ENCODE measurements at regions of chr12 and their contacts with region 1.

Region 1: DNA sequence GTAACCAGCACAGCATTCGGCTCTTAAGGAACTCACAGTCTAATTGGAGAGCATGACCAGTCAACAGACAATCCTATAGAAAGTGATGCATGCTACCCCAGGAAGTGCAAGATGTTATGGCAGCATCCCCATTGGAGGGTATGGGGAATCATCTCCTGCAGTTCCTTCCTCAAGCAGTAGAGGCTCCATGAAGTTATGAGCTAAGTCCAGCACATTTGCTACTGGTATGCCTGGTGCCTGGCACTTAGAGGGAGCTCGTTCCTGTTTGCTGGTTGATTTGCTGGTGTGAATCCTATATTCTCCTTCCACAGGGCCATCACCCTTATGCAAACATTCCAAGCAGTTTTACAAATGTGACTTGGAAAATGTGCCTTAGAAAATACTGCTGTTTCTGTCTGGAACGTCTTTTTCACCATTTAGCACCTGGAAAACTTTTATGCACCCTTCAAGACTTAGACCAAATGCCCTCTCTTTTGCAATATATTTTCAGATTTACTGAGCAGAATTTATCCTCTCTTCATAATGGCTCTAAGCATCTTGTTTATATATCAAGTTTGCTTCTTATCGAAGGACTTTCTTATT is 136.1 kb upstream of the WSCD2 start:
- DNase-seq: peak; percentile 8
- H3K4me3 Mint-ChIP-seq: no peak overlapping the region
- H3K27ac Mint-ChIP-seq: no peak overlapping the region
- H3K4me1 Mint-ChIP-seq: no peaks in the 10 kb centered on the region
- H3K27me3 Mint-ChIP-seq: peaks cover 11% of the 10 kb centered on the region

Region 2: GRCh38 chr12:108033090-108033489 is 40.1 kb after region 1 on chr12:
- CTCF ChIA-PET with region 1: no interaction called
- POLR2A ChIA-PET with region 1: no interaction called
- intact Hi-C with region 1: no loop called
- DNase-seq: no peak
- H3K4me3 Mint-ChIP-seq: no peak overlapping the region
- H3K27ac Mint-ChIP-seq: no peak overlapping the region
- H3K4me1 Mint-ChIP-seq: no peaks in the 10 kb centered on the region
- H3K27me3 Mint-ChIP-seq: peaks cover 14% of the 10 kb centered on the region

Region 3: GRCh38 chr12:108193917-108194316 is 201.0 kb after region 1 on chr12:
- CTCF ChIA-PET with region 1: interaction called, 35 read pairs
- POLR2A ChIA-PET with region 1: no interaction called
- intact Hi-C with region 1: loop called (anchors 10 kb)
- DNase-seq: peak; percentile 21
- H3K4me3 Mint-ChIP-seq: no peak overlapping the region
- H3K27ac Mint-ChIP-seq: no peak overlapping the region
- H3K4me1 Mint-ChIP-seq: no peaks in the 10 kb centered on the region
- H3K27me3 Mint-ChIP-seq: peaks cover 4% of the 10 kb centered on the region

Region 4: GRCh38 chr12:108214486-108214885 is 221.5 kb after region 1 on chr12:
- CTCF ChIA-PET with region 1: no interaction called
- POLR2A ChIA-PET with region 1: no interaction called
- intact Hi-C with region 1: no loop called
- DNase-seq: peak; percentile 27
- H3K4me3 Mint-ChIP-seq: no peak overlapping the region
- H3K27ac Mint-ChIP-seq: no peak overlapping the region
- H3K4me1 Mint-ChIP-seq: no peaks in the 10 kb centered on the region
- H3K27me3 Mint-ChIP-seq: peaks cover 25% of the 10 kb centered on the region

Region 5: DNA sequence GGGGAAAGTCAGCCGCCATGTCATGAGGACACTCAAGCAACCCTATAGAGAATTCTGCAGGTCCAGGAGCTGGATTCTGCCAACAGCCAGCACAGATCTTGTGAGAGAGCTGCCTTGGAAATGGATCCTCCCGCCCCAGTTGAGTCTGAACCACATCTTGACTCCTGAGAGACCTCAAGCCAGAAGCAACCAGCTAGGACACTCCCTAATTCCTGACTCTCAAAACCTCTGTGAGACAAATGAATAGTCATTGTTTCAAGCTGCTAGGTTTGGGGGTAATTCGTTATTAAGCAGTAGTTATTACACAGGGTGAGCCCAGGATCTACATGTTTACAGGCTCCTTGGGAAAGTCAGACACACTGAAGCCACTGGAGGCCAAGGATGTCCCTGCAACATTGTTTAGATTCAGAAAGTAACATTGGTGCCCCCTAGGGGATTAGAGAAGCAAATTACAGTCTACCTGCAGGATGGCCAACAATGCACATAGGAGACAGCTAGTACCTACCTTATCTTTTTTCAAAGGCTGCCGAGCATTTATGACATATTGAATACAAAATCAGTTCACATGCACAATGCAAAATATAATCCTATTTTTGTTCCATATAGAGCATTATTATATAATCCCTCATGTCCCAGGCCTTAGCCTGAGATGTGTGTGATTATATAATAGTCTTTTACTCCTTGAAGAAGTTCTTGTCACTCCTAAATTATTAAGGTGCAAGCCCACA is 464.2 kb after region 1 on chr12:
- CTCF ChIA-PET with region 1: interaction called, 8 read pairs
- POLR2A ChIA-PET with region 1: no interaction called
- intact Hi-C with region 1: loop called (anchors 5 kb)
- DNase-seq: no peak
- H3K4me3 Mint-ChIP-seq: no peak overlapping the region
- H3K27ac Mint-ChIP-seq: no peak overlapping the region
- H3K4me1 Mint-ChIP-seq: no peaks in the 10 kb centered on the region
- H3K27me3 Mint-ChIP-seq: peaks cover 15% of the 10 kb centered on the region

Region 6: GRCh38 chr12:108507971-108508642 is 515.1 kb after region 1 on chr12:
- CTCF ChIA-PET with region 1: interaction called, 23 read pairs
- POLR2A ChIA-PET with region 1: no interaction called
- intact Hi-C with region 1: loop called (anchors 2 kb)
- DNase-seq: peak; percentile 60
- H3K4me3 Mint-ChIP-seq: no peak overlapping the region
- H3K27ac Mint-ChIP-seq: no peak overlapping the region
- H3K4me1 Mint-ChIP-seq: peaks cover 20% of the 10 kb centered on the region
- H3K27me3 Mint-ChIP-seq: peaks cover 15% of the 10 kb centered on the region

Measured in activated CD4-positive, alpha-beta memory T cell treated with anti-CD3 and anti-CD28 coated beads for 36 hours (primary cell).